Activated CD4-positive, alpha-beta T cell treated with anti-CD3 and anti-CD28 coated beads, Interleukin-2, amount 10 ng/mL, durations not matched to agents 24 days and 14 days (primary cell): ENCODE measurements at regions of chr3 and their contacts with region 1.

Region 1: DNA sequence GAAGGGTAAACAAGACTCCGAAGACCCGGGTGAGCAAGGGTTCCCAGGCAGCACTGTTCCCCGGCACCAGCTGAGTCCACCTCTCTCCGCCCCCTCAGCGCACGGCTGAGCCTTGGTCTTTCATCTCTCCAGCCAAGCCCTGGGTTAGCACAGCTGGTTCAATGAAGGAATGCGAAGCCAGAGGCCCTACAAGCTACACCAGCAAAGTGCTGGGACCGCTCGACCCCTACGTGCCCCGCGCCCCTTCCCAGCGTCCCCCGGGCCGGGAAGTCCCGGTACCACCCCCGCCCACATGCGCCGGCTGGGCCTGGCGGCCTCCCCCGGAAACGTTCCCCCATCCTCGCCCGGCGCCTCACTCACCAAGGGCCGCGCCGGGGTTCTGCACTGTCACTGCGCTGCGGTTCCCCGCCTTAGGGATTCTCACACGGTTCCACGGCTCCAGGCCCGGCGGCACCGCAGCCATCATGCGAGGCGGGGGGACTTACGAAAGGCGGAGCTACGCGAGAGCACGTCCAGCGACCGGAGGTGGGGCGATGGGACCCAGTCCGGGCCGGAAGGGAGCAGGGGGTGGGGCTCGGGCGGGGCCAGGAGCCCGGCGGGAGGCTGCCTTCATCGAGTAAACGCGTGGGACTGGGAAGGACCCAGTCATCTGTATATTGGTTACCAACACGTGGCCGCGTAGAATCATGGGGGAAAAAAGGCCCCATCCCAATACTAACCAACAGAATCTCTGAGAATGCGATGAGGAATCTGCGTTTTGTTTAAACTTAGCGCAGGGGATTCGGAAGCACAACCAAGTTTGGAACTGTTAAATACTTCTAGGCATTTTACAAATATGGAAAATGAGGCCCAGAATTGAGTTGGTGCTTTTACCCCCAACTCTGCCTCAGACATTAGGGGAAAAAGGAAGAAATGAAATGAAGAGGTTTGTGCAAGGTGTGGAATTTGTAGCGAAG is 28.7 kb downstream of the GTPBP8 start:
- DNase-seq: peak; percentile 94
- H3K4me3 Mint-ChIP-seq: peak overlapping the region; percentile 89
- H3K27ac Mint-ChIP-seq: peak overlapping the region; percentile 97
- H3K4me1 Mint-ChIP-seq: peaks cover 40% of the 10 kb centered on the region
- H3K27me3 Mint-ChIP-seq: no peaks in the 10 kb centered on the region

Region 2: DNA sequence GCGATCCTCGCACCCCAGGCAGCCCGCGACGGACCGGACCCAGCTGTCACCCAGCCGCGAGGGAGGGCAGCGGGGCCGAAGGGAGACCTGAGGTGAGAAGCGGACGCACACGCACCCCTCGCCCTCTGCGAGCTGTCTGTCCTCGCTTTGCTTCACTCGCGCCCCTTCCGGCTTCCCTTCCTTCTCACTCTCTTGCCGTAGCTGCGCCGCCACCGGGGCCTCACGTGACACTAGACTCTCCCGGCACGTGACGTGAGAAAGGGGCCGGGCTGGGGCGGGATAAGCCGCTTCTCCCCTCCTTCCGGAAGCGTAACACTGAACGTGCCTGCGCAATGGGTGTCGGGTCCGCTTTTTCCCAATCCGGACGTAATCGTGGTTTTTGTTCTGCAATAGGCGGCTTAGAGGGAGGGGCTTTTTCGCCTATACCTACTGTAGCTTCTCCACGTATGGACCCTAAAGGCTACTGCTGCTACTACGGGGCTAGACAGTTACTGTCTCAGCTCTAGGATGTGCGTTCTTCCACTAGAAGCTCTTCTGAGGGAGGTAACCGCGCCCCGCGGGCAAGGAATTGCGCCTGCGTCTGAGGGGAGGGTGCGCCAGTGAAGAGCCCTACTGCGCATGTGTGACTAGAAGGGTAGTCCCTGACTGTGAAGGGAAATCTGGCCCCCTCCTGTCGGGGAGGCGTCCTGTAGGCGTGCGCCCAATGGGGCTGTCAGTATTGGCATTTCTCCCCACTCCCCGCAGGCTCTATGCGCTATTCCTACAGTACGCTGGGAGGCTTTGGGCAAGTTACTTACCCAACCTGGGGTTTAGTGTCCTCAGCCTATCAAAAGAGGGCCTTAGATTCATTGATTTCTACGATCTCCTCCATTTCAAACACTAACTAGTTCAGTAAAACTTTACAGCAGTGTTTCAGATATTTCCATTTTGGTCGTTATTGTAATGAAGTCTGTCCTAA is 457.4 kb before region 1 on chr3 and contains the starts of genes ATG3 and SLC35A5:
- intact Hi-C with region 1: loop called (anchors 1 kb)
- DNase-seq: peak; percentile 100
- H3K4me3 Mint-ChIP-seq: peak within 1 kb of the TSS; percentile 98
- H3K27ac Mint-ChIP-seq: peak within 1 kb of the TSS; percentile 99
- H3K4me1 Mint-ChIP-seq: peaks cover 24% of the 10 kb centered on the region
- H3K27me3 Mint-ChIP-seq: no peaks in the 10 kb centered on the region
- total RNA-seq, gene ATG3: 66.9 and 69.1 TPM in 2 replicates
- total RNA-seq, gene SLC35A5: 15.5 and 16.3 TPM in 2 replicates

Region 3: DNA sequence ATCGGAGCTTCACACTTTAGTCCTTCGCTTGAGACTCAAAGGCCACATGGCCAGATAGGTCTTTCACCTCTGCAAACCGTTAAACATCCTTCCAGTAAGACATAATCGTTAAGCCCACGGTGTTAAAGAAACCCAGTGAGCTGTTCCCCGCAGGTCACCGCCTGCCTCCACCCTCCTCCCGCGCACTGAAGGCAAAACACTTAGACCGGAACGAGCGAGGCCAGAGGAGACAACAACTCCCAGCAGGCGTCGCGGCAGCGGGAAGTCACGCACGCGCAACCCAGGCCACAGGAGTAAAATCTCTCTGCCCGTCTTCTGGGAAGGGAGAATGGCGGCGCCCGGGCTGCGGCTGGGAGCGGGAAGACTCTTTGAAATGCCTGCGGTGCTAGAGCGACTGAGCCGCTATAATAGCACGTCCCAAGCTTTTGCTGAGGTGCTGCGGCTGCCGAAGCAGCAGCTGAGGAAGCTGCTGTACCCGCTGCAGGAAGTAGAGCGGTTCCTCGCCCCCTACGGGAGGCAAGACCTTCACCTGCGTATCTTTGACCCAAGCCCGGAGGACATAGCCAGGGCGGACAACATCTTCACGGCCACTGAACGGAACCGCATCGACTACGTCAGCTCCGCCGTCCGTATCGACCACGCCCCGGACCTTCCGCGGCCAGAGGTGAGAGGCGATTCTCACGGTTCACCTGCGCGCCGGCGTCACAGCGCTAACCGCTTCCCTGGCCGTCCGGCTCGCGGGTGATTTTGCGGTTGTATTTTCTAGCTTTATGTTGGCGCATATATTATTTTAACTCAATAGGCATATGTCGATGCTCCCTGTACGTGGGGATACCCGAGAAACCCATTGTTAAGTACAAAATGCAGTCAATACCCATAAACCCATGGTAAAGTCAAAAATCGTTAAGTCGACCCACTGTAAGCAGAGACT is 28.5 kb before region 1 on chr3 and contains the start of gene GTPBP8:
- intact Hi-C with region 1: loop called (anchors 1 kb)
- DNase-seq: peak; percentile 95
- H3K4me3 Mint-ChIP-seq: peak within 1 kb of the TSS; percentile 88
- H3K27ac Mint-ChIP-seq: peak within 1 kb of the TSS; percentile 97
- H3K4me1 Mint-ChIP-seq: peaks cover 56% of the 10 kb centered on the region
- H3K27me3 Mint-ChIP-seq: no peaks in the 10 kb centered on the region
- total RNA-seq, gene GTPBP8: 18.4 and 18.9 TPM in 2 replicates

Region 4: DNA sequence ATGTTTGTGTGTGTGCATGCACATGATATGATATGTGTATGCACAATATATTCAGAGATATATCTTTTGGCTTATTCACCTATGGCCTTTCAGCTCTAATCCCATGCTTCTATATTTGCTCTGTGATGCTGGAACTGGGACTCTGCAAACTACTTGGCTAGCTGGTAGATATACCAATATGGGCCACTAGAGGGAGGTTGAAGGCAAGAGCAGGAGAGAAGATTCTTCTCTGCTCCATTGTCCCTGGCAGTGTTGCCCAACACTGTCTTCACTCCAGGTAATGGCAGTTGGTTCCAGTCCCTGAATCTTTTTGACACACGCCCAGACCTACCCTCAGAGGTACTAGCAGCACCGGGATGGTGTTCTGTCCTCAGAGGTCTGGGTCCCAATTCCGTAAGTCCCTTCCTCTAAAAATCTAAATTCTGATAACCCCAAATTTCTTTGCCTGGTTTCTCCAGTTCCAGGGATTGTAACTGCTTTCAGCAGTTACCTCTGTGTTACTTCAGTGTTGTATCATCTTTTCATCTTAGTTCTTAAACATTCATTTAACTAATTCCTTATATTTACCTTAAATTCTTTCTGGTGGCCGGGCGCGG is 16.0 kb after region 1 on chr3:
- intact Hi-C with region 1: loop called (anchors 2 kb)
- DNase-seq: peak; percentile 84
- H3K4me3 Mint-ChIP-seq: no peak overlapping the region
- H3K27ac Mint-ChIP-seq: no peak overlapping the region
- H3K4me1 Mint-ChIP-seq: no peaks in the 10 kb centered on the region
- H3K27me3 Mint-ChIP-seq: no peaks in the 10 kb centered on the region

Region 5: GRCh38 chr3:113223475-113224281 is 204.2 kb after region 1 on chr3:
- intact Hi-C with region 1: no loop called
- DNase-seq: peak; percentile 79
- H3K4me3 Mint-ChIP-seq: peak overlapping the region; percentile 55
- H3K27ac Mint-ChIP-seq: peak overlapping the region; percentile 1
- H3K4me1 Mint-ChIP-seq: peaks cover 9% of the 10 kb centered on the region
- H3K27me3 Mint-ChIP-seq: peaks cover 24% of the 10 kb centered on the region

Region 6: DNA sequence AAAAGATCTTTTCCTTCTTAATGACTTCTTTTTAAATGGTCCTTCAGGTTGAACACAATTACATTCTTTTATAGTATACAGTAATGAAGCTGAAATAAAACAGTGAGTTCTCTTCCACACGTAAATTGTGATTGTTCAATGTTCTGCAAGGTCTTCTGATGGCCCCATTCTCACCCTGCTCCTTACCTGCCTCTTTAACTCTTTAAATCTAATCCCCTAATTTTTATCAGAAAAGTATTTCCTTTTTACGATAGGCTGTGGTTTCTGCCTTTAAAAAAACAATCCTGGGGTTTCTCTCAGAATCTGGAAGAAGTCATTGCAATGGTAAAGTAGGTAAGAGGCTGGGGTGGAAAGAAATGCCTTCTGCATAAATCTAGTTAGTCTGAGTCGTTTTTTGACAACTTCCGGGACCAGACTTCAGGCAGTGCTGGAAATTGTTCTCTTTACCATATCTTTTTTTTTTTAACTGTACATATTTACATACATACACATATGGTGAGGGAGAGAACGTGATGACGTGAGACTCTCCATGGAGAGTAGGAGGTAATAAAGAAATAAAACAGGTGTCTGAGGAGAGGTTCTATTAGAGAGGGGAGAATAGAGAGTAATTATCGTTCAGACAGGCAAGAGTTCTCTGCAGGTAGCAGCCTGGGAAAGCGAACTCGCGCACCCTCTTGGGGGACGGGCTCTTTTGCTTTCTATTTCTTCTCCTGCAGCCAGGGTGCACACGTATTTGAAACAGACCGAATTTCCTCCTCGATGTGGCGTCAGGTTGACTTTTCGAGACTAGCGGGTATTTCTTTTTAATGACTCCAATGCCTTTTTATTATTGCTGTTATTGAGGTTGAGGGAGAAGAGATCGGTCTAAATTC is 512.6 kb after region 1 on chr3 and contains the start of gene SIDT1:
- intact Hi-C with region 1: loop called (anchors 5 kb)
- DNase-seq: peak; percentile 92
- H3K4me3 Mint-ChIP-seq: peak within 1 kb of the TSS; percentile 91
- H3K27ac Mint-ChIP-seq: peak within 1 kb of the TSS; percentile 96
- H3K4me1 Mint-ChIP-seq: peaks cover 36% of the 10 kb centered on the region
- H3K27me3 Mint-ChIP-seq: peaks cover 11% of the 10 kb centered on the region
- total RNA-seq, gene SIDT1: 8.5 and 11.5 TPM in 2 replicates

Region 7: GRCh38 chr3:114056130-114057010 is 1036.9 kb after region 1 on chr3 and contains the starts of genes CCDC191 and QTRT2:
- intact Hi-C with region 1: loop called (anchors 2 kb)
- DNase-seq: peak; percentile 100
- H3K4me3 Mint-ChIP-seq: peak within 1 kb of the TSS; percentile 93
- H3K27ac Mint-ChIP-seq: peak within 1 kb of the TSS; percentile 95
- H3K4me1 Mint-ChIP-seq: peaks cover 30% of the 10 kb centered on the region
- H3K27me3 Mint-ChIP-seq: peaks cover 2% of the 10 kb centered on the region
- total RNA-seq, gene CCDC191: 0.66 and 1.7 TPM in 2 replicates
- total RNA-seq, gene QTRT2: 50.5 and 55.3 TPM in 2 replicates